Activated CD4-positive, alpha-beta memory T cell treated with anti-CD3 and anti-CD28 coated beads for 36 hours (primary cell): ENCODE measurements at regions of chr14 and their contacts with region 1.

Region 1: GRCh38 chr14:35292051-35292769 is at the start of gene PSMA6:
- DNase-seq: peak; percentile 100
- H3K4me3 Mint-ChIP-seq: peak within 1 kb of the TSS; percentile 99
- H3K27ac Mint-ChIP-seq: peak within 1 kb of the TSS; percentile 97
- H3K4me1 Mint-ChIP-seq: peaks cover 50% of the 10 kb centered on the region
- H3K27me3 Mint-ChIP-seq: no peaks in the 10 kb centered on the region
- total RNA-seq, gene PSMA6: 407 to 425 TPM

Region 2: DNA sequence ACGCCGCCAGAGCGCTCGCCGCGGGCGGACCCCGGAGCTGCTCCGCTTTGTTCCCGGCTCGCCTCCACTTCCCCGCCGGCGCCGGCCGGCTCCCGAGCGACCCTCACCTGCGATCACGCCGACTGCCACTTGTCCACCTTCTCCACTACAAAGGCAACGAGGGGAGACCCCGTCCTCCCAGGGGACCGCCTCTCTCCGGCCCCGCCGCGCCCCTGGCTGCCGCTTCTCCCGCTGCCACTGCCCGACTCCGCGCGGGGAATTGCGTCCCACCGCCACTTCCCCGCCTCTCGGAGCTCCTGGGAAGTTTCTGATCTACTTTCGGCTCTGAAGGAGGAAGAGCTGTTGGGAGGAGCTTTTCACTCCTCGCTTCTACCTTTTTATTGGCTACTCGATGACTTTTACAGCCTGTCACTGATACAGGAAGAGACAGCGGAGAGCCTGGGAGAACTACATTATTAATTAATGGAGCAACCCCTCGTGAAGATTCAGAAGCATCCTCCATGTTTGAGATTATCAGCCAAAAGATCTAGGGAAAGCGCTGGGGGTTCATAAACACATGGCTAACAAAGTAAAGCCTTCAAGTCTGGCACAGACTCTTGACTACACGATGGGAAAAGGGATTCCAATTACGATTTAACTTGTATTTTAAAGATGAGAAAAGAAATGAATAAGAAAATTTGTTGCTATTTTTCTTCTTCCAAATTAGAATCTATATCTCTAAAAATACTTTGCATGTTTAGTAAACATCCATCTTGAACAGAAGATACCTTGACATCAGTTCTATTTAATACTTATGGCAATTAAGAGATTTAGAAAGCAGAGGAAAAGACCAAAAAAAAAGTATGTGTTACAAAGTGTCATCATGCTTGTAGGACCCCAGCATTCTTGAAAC is 416.9 kb before region 1 on chr14 and contains the start of gene BAZ1A:
- CTCF ChIA-PET with region 1: no interaction called
- POLR2A ChIA-PET with region 1: no interaction called
- intact Hi-C with region 1: loop called (anchors 1 kb)
- DNase-seq: peak; percentile 52
- H3K4me3 Mint-ChIP-seq: peak within 1 kb of the TSS; percentile 100
- H3K27ac Mint-ChIP-seq: peak within 1 kb of the TSS; percentile 98
- H3K4me1 Mint-ChIP-seq: peaks cover 33% of the 10 kb centered on the region
- H3K27me3 Mint-ChIP-seq: no peaks in the 10 kb centered on the region
- total RNA-seq, gene BAZ1A: 67.8 to 68.0 TPM

Region 3: GRCh38 chr14:35046048-35046741 is 246.0 kb before region 1 on chr14 and contains the start of gene FAM177A1:
- CTCF ChIA-PET with region 1: no interaction called
- POLR2A ChIA-PET with region 1: interaction called, 7 read pairs
- intact Hi-C with region 1: loop called (anchors 2 kb)
- DNase-seq: peak; percentile 99
- H3K4me3 Mint-ChIP-seq: peak within 1 kb of the TSS; percentile 97
- H3K27ac Mint-ChIP-seq: peak within 1 kb of the TSS; percentile 98
- H3K4me1 Mint-ChIP-seq: peaks cover 28% of the 10 kb centered on the region
- H3K27me3 Mint-ChIP-seq: no peaks in the 10 kb centered on the region
- total RNA-seq, gene FAM177A1: 48.8 to 56.8 TPM

Region 4: GRCh38 chr14:35140718-35141581 is 151.3 kb before region 1 on chr14:
- CTCF ChIA-PET with region 1: interaction called, 5 read pairs
- POLR2A ChIA-PET with region 1: no interaction called
- intact Hi-C with region 1: loop called (anchors 5 kb)
- DNase-seq: no peak
- H3K4me3 Mint-ChIP-seq: no peak overlapping the region
- H3K27ac Mint-ChIP-seq: no peak overlapping the region
- H3K4me1 Mint-ChIP-seq: peaks cover 17% of the 10 kb centered on the region
- H3K27me3 Mint-ChIP-seq: no peaks in the 10 kb centered on the region

Region 5: DNA sequence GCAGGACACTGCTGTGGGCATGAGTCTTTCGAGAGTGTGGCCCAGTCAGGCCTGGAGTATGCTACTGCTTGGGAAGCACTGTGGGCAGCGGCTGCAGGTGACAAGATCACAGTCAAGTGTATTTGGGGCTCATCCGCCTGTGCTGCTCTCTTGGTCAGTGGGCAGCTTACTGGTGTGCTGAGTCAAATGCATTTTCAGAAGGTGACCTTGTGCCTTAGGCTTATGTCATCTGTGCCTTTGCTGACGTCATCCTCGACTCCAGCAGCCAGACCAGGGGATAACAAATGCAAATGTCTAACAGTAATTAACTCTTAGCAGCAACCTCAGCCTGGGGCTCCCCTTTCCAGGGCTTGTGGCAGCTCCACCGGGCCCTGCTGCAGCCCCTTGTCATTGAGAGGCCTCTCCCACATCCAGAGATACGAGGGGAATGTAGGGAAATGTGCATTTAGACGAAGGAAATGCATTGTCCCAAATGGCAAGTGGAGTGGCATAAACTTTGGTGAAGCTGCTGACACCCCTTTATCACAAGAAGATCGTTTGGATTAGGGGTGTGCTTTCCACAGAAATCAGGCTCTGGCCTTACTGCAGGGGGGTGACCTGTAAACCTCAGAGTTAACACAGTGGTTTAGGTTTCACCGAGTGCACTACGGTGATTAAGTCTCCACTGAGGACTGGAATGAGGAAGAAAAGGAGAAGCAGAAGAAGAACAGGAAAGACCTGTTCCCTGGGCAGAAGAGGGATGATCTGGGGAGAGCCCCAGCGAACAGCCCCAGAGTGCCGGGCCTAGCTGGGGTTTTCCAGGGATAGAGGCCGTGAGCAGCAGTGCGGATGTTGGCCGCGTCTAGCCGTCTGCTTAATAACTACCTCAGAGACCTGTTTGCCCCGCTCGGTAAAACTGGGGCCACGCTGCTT is 39.7 kb after region 1 on chr14:
- CTCF ChIA-PET with region 1: no interaction called
- POLR2A ChIA-PET with region 1: interaction called, 12 read pairs
- intact Hi-C with region 1: loop called (anchors 1 kb)
- DNase-seq: no peak
- H3K4me3 Mint-ChIP-seq: no peak overlapping the region
- H3K27ac Mint-ChIP-seq: peak overlapping the region; percentile 95
- H3K4me1 Mint-ChIP-seq: peaks cover 30% of the 10 kb centered on the region
- H3K27me3 Mint-ChIP-seq: no peaks in the 10 kb centered on the region

Region 6: DNA sequence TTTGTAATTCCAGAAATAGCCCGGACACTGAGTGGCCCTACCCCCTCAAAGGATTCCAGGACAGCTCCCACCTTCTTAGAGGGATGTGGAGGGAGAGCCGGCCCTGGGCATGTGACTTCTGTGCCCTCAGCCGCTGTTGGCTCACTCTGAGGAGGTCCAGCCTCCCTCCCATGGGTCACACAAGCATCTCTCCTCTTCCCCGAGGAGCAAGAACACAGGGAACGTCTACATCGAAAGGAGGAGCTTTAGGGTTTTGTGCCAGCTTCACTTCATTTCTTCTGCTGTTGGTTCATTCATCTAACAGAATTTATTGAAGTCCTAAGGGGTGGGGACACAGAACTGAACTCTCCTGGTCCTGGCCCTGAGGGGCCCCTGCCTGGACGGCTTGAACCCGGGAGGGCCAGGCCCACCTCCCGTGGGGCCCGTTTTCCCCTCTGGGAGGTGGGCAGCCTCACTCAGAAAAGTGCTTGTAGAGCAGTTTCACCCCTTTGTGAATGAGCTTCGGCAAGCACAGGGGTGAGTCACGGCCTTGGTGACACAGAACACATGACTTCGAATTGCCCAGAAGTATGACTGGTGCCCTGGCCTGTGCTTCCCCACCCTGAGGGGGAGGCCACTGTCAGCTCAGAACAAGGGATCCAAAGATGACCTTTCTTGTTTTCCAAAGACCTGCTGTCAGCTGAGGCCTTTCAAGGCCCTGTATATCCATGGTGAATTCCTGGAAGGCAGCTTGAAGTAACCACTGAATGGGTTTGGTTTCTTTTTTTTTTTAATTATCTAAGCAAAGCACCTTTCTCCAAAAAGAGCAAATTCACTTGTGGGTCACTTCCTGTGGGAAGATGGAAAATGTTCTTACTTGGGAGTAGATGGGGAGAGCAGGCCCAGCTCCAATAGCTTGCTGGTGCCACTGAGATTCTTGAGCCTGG is 73.2 kb after region 1 on chr14:
- CTCF ChIA-PET with region 1: interaction called, 8 read pairs
- POLR2A ChIA-PET with region 1: interaction called, 14 read pairs
- intact Hi-C with region 1: loop called (anchors 2 kb)
- DNase-seq: peak; percentile 94
- H3K4me3 Mint-ChIP-seq: peak overlapping the region; percentile 56
- H3K27ac Mint-ChIP-seq: peak overlapping the region; percentile 96
- H3K4me1 Mint-ChIP-seq: peaks cover 48% of the 10 kb centered on the region
- H3K27me3 Mint-ChIP-seq: no peaks in the 10 kb centered on the region